ENCODE measurements at regions of chr11 and their contacts with region 1.

Region 1: DNA sequence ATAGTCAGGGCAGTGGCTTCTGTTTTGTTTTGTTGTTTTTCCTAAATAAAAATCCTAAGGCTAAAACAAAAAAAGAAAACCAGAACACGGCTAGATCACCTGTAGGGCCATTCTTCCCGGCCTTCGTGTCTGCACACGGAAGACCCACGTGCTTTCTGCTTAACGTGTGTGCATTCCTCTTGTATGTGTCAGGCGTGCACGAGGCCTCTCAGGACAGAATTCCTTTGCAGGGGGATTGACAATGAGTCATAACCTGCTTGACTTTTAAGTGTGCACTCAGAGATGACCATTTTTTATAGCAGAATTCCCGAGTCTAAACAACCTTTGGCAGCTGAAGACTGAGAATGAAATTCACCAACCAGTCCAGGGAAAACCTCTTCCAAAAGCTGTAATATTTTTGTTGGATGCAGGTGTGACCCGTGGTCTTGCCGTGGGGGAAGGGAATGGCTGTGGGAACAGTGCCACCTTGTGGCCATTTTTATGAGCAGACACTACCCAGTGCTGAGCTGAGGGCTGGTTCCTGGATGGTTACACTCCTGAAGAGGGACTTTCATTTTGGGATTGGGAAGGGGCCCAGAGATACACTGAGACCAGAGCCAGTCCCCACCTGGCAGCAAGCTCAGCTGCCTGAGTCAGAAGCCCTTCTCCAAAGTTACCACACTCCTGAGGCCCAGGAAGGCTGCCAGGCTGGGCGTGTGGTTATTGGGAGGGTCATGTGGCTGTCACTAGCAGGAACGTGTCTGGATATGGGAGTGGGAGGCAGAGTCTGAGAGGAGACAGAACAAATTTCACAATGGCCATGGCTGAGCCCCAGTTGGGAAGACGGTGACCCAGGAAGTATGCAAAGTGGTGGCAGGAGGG is 35.8 kb upstream of the DKK3 start:
- DNase-seq: peak; percentile 74
- ATAC-seq: peak; percentile 81
- H3K4me3 Mint-ChIP-seq: no peak overlapping the region
- H3K27ac Mint-ChIP-seq: no peak overlapping the region
- H3K4me1 Mint-ChIP-seq: peaks cover 4% of the 10 kb centered on the region
- H3K27me3 Mint-ChIP-seq: peaks cover 2% of the 10 kb centered on the region
- CTCF ChIP-seq: peak; percentile 94

Region 2: GRCh38 chr11:11931461-11932055 is 112.6 kb before region 1 on chr11:
- CTCF ChIA-PET with region 1: interaction called, 19 read pairs
- POLR2A ChIA-PET with region 1: no interaction called
- intact Hi-C with region 1: loop called (anchors 2 kb)
- DNase-seq: peak; percentile 24
- ATAC-seq: no peak
- H3K4me3 Mint-ChIP-seq: no peak overlapping the region
- H3K27ac Mint-ChIP-seq: no peak overlapping the region
- H3K4me1 Mint-ChIP-seq: peaks cover under 1% of the 10 kb centered on the region
- H3K27me3 Mint-ChIP-seq: no peaks in the 10 kb centered on the region
- CTCF ChIP-seq: peak; percentile 72

Region 3: DNA sequence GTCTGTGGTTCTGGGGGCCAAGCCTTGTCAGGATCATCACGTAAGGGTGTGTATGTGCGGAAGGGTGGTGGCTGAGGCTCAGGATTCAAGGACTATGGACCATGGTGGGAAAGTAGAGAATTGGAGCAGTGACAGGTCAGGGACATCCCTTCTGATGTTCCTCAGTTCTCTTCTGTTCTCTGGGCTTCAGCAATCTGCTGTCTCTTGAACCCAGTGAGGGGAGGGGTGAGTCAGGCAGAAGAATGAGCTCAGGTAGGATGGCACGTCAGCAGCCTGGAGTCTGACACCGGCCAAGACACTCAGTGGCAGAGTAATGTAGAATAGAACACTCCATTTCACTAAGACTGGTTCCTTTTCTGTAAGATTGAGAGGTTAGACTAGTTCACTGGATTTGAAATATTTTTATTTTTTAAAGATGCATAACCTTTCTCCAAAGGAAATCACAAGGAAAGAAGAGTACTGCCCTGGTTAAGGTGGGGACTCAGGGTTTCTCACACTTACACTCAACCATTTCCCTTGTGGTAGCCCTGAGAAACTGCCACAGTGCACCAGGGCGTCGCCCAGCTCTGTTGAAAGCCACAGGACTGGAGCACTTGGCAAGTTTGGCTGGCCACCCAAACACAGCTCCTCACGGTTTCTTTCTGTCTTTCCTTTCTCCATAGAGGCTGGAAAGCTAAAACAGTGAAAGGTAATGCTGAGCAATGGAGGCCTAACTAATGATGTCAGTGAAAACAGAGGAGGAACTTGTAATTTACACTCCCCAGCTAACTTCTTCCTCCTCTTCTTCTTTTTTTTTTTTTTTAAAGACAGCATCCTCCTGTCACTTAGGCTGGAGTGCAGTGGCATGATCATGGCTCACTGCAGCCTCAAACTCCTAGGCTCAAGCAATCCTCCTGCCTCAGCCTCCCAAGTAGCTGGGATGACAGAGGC is 43.2 kb after region 1 on chr11:
- CTCF ChIA-PET with region 1: interaction called, 15 read pairs
- POLR2A ChIA-PET with region 1: no interaction called
- intact Hi-C with region 1: no loop called
- DNase-seq: peak; percentile 69
- ATAC-seq: peak; percentile 86
- H3K4me3 Mint-ChIP-seq: no peak overlapping the region
- H3K27ac Mint-ChIP-seq: peak overlapping the region; percentile 75
- H3K4me1 Mint-ChIP-seq: peaks cover 60% of the 10 kb centered on the region
- H3K27me3 Mint-ChIP-seq: no peaks in the 10 kb centered on the region
- CTCF ChIP-seq: no peak

Region 4: DNA sequence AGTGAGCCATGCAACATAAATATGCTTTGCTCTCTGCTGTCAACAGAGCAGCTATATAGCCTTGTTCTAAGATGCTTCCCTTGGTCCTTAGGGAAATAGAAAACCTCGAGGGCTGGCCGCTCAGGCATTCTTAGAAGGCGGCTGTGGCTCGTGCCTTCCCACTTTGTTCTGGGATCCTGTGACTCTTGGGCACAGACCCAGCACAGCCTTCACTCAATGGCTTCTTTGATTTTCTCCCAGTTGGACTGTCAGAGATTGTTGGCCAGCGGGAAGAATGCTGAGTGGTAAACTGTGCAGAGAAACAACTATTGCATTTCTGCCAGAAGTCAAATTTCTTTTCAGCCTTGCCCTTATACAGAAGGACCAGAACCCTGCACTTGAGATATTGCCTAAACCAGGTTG is 56.7 kb after region 1 on chr11:
- CTCF ChIA-PET with region 1: no interaction called
- POLR2A ChIA-PET with region 1: no interaction called
- intact Hi-C with region 1: no loop called
- DNase-seq: no peak
- ATAC-seq: no peak
- H3K4me3 Mint-ChIP-seq: no peak overlapping the region
- H3K27ac Mint-ChIP-seq: no peak overlapping the region
- H3K4me1 Mint-ChIP-seq: peaks cover 5% of the 10 kb centered on the region
- H3K27me3 Mint-ChIP-seq: no peaks in the 10 kb centered on the region
- CTCF ChIP-seq: no peak

Region 5: GRCh38 chr11:12281571-12282478 is 237.6 kb after region 1 on chr11:
- CTCF ChIA-PET with region 1: interaction called, 167 read pairs
- POLR2A ChIA-PET with region 1: interaction called, 3 read pairs
- intact Hi-C with region 1: loop called (anchors 1 kb)
- DNase-seq: peak; percentile 84
- ATAC-seq: peak; percentile 79
- H3K4me3 Mint-ChIP-seq: no peak overlapping the region
- H3K27ac Mint-ChIP-seq: no peak overlapping the region
- H3K4me1 Mint-ChIP-seq: peaks cover 5% of the 10 kb centered on the region
- H3K27me3 Mint-ChIP-seq: no peaks in the 10 kb centered on the region
- CTCF ChIP-seq: peak; percentile 97

Region 6: GRCh38 chr11:12893787-12894672 is 849.8 kb after region 1 on chr11:
- CTCF ChIA-PET with region 1: interaction called, 5 read pairs
- POLR2A ChIA-PET with region 1: no interaction called
- intact Hi-C with region 1: loop called (anchors 10 kb)
- DNase-seq: peak; percentile 74
- ATAC-seq: peak; percentile 55
- H3K4me3 Mint-ChIP-seq: no peak overlapping the region
- H3K27ac Mint-ChIP-seq: no peak overlapping the region
- H3K4me1 Mint-ChIP-seq: no peaks in the 10 kb centered on the region
- H3K27me3 Mint-ChIP-seq: peaks cover 22% of the 10 kb centered on the region
- CTCF ChIP-seq: peak; percentile 88